ENCODE measurements at regions of chr3 and their contacts with region 1.

Region 1: GRCh38 chr3:187112934-187113793 is 26.1 kb downstream of the RPL39L start:
- DNase-seq: no peak
- ATAC-seq: peak; percentile 71
- H3K4me3 ChIP-seq: no peak overlapping the region
- H3K27ac ChIP-seq: no peak overlapping the region
- H3K4me1 ChIP-seq: peaks cover 4% of the 10 kb centered on the region; the same call in 1 of the 2 replicates
- H3K27me3 ChIP-seq: no peaks in the 10 kb centered on the region
- CTCF ChIP-seq: peak; percentile 49 to 59 (median 49); a peak in 5 of 6 replicates
- EP300 ChIP-seq: 0 out of 4 replicates have a peak, but pooled peaks of 1 of the 2 experiments have one; percentile 16
- POLR2A ChIP-seq: no peak
- RAD21 ChIP-seq: peak; percentile 78

Region 2: DNA sequence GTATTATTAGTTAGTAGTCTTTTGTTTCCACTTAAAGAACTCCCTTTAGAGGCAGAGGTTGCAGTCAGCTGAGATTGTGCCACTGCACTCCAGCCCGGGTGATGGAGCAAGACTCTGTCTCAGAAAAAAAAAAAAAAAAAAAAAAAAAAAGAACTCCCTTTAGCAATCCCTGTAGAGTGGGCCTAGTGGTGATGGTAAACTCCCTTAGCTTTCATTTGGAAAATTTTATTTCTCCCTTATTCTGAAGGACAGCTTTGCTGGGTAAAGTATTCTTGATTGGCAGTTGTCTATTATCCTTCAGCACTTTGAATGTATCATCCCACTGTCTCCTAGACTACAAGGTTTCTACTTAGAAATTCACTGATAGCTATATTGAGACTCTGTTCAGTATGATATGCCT is 19.8 kb before region 1 on chr3:
- CTCF ChIA-PET with region 1: interaction called, 19 read pairs
- POLR2A ChIA-PET with region 1: no interaction called
- RAD21 ChIA-PET with region 1: no interaction called
- SMC1A ChIA-PET with region 1: interaction called, 3 read pairs
- in situ Hi-C with region 1: no loop called
- intact Hi-C with region 1: no loop called
- DNase-seq: no peak
- ATAC-seq: no peak
- H3K4me3 ChIP-seq: no peak overlapping the region
- H3K27ac ChIP-seq: no peak overlapping the region
- H3K4me1 ChIP-seq: no peaks in the 10 kb centered on the region
- H3K27me3 ChIP-seq: no peaks in the 10 kb centered on the region
- CTCF ChIP-seq: no peak
- EP300 ChIP-seq: no peak
- POLR2A ChIP-seq: no peak
- RAD21 ChIP-seq: no peak

Region 3: GRCh38 chr3:187125319-187126031 is 12.3 kb after region 1 on chr3:
- CTCF ChIA-PET with region 1: interaction called, 24 read pairs
- POLR2A ChIA-PET with region 1: interaction called, 6 read pairs
- RAD21 ChIA-PET with region 1: interaction called, 9 read pairs
- SMC1A ChIA-PET with region 1: interaction called, 10 read pairs
- in situ Hi-C with region 1: no loop called
- intact Hi-C with region 1: no loop called
- DNase-seq: peak; percentile 46
- ATAC-seq: peak; percentile 82
- H3K4me3 ChIP-seq: no peak overlapping the region
- H3K27ac ChIP-seq: no peak overlapping the region
- H3K4me1 ChIP-seq: peaks cover 9% of the 10 kb centered on the region
- H3K27me3 ChIP-seq: no peaks in the 10 kb centered on the region
- CTCF ChIP-seq: no peak
- EP300 ChIP-seq: no peak
- POLR2A ChIP-seq: no peak
- RAD21 ChIP-seq: no peak

Region 4: GRCh38 chr3:187139126-187139894 is 26.1 kb after region 1 on chr3 and contains the start of gene RPL39L:
- CTCF ChIA-PET with region 1: interaction called, 43 read pairs
- POLR2A ChIA-PET with region 1: interaction called, 5 read pairs
- RAD21 ChIA-PET with region 1: interaction called, 13 read pairs
- SMC1A ChIA-PET with region 1: interaction called, 31 read pairs
- in situ Hi-C with region 1: no loop called
- intact Hi-C with region 1: no loop called
- DNase-seq: peak; percentile 64
- ATAC-seq: peak; percentile 99
- H3K4me3 ChIP-seq: peak within 1 kb of the TSS; percentile 63
- H3K27ac ChIP-seq: peak within 1 kb of the TSS; percentile 92
- H3K4me1 ChIP-seq: peaks cover 7% of the 10 kb centered on the region; the same call in 1 of the 2 replicates
- H3K27me3 ChIP-seq: no peaks in the 10 kb centered on the region
- CTCF ChIP-seq: peak; percentile 80 to 86 (median 84)
- EP300 ChIP-seq: no peak
- POLR2A ChIP-seq: peak; percentile 96
- RAD21 ChIP-seq: no peak
- polyA plus RNA-seq, gene RPL39L: 12.5 to 33.7 TPM

Region 5: DNA sequence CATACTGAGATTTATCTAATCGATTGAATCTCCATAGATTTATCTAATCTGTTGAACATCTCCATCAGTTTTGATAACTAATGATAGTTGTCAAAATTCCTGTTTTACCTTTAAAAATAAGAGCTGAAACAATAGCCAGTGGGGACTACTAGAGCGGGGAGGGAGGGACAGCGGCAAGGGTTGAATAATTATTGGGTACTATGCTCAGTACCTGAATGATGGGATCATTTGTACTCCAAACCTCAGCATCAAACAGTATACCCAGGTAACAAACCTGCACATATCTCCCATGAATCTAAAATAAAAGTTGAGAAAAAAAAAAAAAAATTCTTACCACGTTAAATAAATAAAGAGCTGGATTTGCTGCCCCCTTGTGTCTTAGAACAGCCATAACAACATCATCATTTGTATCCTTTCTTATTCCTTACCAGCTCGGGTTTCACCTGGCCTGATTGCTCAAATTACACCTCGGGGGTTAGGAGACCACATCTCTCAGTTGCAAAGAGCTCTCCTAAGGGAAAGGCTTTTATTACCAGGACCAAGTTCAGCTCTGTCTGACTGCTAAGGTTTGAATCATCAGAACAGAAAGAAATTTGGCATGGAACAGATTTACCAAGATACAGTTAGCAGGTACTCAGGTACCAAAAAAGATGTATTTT is 51.9 kb after region 1 on chr3:
- CTCF ChIA-PET with region 1: interaction called, 197 read pairs
- POLR2A ChIA-PET with region 1: interaction called, 3 read pairs
- RAD21 ChIA-PET with region 1: interaction called, 54 read pairs
- SMC1A ChIA-PET with region 1: interaction called, 111 read pairs
- in situ Hi-C with region 1: no loop called
- intact Hi-C with region 1: loop called (anchors 1 kb)
- DNase-seq: no peak
- ATAC-seq: peak; percentile 76
- H3K4me3 ChIP-seq: no peak overlapping the region
- H3K27ac ChIP-seq: no peak overlapping the region
- H3K4me1 ChIP-seq: no peaks in the 10 kb centered on the region
- H3K27me3 ChIP-seq: no peaks in the 10 kb centered on the region; a peak in 1 of 4 replicates
- CTCF ChIP-seq: peak; percentile 52 to 60 (median 57); a peak in 5 of 6 replicates
- EP300 ChIP-seq: no peak
- POLR2A ChIP-seq: no peak
- RAD21 ChIP-seq: peak; percentile 74